Activated T-helper 2 cell treated with anti-CD3 and anti-CD28 coated beads, Interferon-gamma antibody, Interleukin-2, Interleukin-4, amounts not matched to agents 10 μg/mL and 5 μg/mL and 100 μg/mL, durations not matched to agents 14 hours and 24 hours and 36 hours (primary cell): ENCODE measurements at regions of chr20 and their contacts with region 1.

Region 1: GRCh38 chr20:63864847-63865640 is at the start of gene TPD52L2:
- DNase-seq: peak; percentile 97
- H3K4me3 Mint-ChIP-seq: peak within 1 kb of the TSS; percentile 96
- H3K27ac Mint-ChIP-seq: peak within 1 kb of the TSS; percentile 91
- H3K4me1 Mint-ChIP-seq: peaks cover 22% of the 10 kb centered on the region
- H3K27me3 Mint-ChIP-seq: no peaks in the 10 kb centered on the region
- total RNA-seq, gene TPD52L2: 62.5 and 66.7 TPM in 2 replicates

Region 2: GRCh38 chr20:63635431-63636141 is 229.5 kb before region 1 on chr20:
- intact Hi-C with region 1: loop called (anchors 10 kb)
- DNase-seq: peak; percentile 76
- H3K4me3 Mint-ChIP-seq: peak overlapping the region; percentile 45
- H3K27ac Mint-ChIP-seq: peak overlapping the region; percentile 93
- H3K4me1 Mint-ChIP-seq: peaks cover 45% of the 10 kb centered on the region
- H3K27me3 Mint-ChIP-seq: no peaks in the 10 kb centered on the region

Region 3: DNA sequence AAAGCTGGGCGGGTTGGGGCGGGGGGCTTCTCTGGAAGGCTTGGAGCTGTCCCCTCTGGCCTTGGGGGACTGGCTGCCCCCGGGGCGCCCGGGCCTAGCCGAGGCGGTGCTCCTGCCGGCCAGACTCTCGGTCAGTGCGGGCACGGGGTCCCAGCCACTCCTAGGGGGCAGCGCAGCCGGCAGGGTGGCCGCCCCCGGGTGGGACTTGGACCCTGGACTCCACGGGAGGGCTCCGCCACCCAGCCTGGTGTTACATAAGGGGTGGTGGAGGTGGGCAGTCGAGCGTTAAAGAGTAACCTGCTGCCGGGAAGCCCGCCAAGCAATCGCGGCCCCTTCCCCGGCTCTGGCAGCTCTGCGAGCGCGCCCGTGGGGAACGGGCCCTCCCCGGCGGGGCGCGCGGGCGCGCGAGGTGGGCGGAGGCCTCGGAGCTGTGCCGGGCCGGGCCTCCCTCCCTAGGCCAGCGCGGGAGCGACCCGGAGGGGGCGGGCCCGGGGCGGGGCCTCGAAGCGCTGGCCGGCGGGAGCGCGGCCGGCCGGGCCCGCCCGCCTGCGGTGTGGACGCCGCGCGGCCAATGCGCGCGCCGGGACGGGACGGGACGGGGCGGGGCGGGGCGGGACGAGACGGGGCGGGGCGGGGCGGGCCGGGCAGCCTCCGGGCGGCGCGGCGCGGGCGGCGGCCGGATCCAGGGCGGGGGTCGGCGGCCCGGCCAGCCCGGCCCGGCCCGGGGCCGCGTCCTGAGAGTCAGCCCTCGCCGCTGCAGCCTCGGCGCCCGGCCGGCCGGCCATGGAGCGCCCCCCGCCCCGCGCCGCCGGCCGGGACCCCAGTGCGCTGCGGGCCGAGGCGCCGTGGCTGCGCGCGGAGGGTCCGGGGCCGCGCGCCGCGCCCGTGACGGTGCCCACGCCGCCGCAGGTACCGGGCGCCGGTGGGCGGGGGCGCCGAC is 125.6 kb before region 1 on chr20 and contains the start of gene SLC2A4RG:
- intact Hi-C with region 1: loop called (anchors 10 kb)
- DNase-seq: peak; percentile 72
- H3K4me3 Mint-ChIP-seq: peak within 1 kb of the TSS; percentile 13
- H3K27ac Mint-ChIP-seq: no peak within 1 kb of the TSS
- H3K4me1 Mint-ChIP-seq: peaks cover 12% of the 10 kb centered on the region
- H3K27me3 Mint-ChIP-seq: no peaks in the 10 kb centered on the region
- total RNA-seq, gene SLC2A4RG: 48.3 and 53.0 TPM in 2 replicates

Region 4: DNA sequence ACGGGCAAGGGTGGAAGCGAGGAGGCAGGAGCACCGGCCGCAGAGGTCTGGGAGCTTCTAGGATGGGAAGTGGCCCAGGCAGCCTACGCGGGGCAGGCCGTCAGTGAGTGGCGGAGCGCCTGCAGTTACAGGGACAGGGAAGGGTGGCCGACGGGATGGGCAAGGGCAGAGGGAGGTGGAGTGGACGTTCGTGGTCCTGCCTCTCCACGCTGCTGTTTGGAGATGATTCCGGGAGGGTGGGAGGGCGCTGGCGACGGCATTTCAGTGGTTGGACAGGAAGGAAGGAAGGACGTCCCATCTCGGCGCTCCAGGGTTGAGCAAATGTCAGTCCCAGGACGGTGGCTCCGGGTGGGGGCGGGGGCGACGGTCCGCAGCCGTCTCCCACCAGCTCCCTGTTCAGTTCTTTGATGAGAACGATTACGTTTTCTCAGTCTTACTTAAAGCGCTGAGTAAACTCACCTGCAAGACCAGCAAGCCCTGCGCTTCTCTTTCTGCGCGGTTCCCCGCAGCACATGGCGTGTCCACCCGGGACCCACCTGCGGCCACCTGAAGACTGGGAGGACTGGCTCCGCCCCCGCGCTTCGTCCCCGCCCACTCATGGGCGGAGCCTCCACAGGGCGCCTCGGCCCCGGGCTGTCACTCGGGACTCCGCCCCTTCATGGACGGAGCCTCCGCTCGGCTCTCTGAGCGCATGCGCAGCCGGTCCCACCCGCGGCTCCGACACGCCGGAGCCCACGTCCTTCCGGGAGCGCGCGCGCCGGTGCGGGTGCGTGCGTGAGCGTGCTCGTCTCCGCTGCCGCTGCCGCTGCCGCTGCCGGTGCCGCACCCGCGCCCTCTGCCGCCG is 29.5 kb after region 1 on chr20 and contains the start of gene DNAJC5:
- intact Hi-C with region 1: loop called (anchors 2 kb)
- DNase-seq: peak; percentile 95
- H3K4me3 Mint-ChIP-seq: peak within 1 kb of the TSS; percentile 97
- H3K27ac Mint-ChIP-seq: peak within 1 kb of the TSS; percentile 94
- H3K4me1 Mint-ChIP-seq: peaks cover 36% of the 10 kb centered on the region
- H3K27me3 Mint-ChIP-seq: no peaks in the 10 kb centered on the region
- total RNA-seq, gene DNAJC5: 38.1 and 40.0 TPM in 2 replicates